Activated T-helper 2 cell treated with anti-CD3 and anti-CD28 coated beads, Interferon-gamma antibody, Interleukin-2, Interleukin-4, amounts not matched to agents 10 μg/mL and 5 μg/mL and 100 μg/mL, durations not matched to agents 14 hours and 24 hours and 36 hours (primary cell): ENCODE measurements at regions of chr3 and their contacts with region 1.

Region 1: DNA sequence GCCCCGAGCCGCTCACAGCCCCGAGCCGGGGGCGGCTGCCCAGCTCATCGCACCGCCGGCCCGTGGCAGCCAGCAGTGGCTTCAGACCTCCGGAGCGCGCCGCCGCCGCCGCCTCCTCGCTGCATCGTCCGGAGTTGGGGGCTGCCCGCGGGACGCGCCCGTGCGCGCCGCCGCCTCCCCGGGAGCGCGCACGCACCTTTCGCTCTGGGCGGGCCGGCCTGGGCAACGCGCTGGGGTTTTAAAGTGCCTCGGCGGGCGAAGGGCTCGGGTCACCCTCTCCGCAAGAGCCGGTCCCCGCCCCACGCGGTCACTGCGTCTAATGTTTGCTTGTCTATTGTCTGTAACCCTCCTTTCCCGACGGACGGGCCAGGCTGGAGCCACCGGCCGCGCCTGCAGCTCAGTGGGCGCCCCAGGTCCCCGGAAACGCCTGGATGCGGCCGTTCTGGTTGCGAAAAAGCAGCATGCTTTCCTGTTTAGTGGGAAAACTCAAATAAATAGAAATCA is at the start of gene RYK:
- DNase-seq: peak; percentile 63
- H3K4me3 Mint-ChIP-seq: peak within 1 kb of the TSS; percentile 87
- H3K27ac Mint-ChIP-seq: peak within 1 kb of the TSS; percentile 77
- H3K4me1 Mint-ChIP-seq: peaks cover 40% of the 10 kb centered on the region
- H3K27me3 Mint-ChIP-seq: peaks cover 44% of the 10 kb centered on the region
- total RNA-seq, gene RYK: 15.8 and 18.4 TPM in 2 replicates

Region 2: DNA sequence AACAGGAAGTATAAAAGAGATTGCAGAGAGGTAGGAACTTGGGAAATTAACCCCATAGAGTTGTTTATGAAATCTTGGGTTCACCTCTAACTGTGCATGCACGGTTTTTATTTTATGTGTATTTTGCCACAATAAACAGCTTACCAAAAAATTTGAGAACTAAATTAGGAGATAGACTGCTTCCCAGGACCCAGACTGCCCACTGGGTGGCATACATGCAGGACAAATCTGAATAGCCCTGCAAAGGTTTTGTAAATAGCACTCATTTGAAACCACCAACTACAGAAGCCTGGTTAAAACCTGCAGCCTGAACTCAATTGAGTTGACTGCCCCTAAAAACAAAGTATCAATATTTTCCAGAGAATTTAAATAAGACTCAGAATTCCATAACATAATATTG is 124.6 kb before region 1 on chr3:
- intact Hi-C with region 1: no loop called
- DNase-seq: no peak
- H3K4me3 Mint-ChIP-seq: no peak overlapping the region
- H3K27ac Mint-ChIP-seq: no peak overlapping the region
- H3K4me1 Mint-ChIP-seq: no peaks in the 10 kb centered on the region
- H3K27me3 Mint-ChIP-seq: no peaks in the 10 kb centered on the region

Region 3: DNA sequence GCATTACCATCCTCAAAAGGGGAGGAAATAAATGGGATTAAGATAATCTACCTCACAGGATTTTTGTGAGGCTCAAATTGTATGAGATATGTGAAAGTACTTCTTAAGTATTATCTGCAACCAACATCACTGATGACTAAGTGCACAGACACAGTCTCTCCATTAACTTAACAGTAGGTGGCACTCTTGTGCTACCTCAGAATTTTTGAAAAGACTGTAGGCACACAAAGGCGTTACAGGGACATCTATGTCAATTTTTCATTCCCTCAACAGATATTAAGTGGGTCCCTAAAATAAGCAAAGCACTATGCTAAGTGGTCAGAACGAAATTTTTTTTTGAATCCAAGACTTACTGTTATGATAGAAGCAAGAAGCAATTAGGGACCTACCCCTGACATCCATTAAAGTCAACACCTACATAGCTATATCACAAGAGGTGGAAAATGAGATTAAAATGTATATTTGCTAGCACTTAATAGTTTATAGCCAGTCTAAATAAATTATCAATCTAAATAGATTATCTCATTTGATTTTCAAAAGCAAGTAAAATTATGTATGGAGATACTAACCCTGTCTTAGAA is 53.0 kb before region 1 on chr3:
- intact Hi-C with region 1: no loop called
- DNase-seq: no peak
- H3K4me3 Mint-ChIP-seq: no peak overlapping the region
- H3K27ac Mint-ChIP-seq: no peak overlapping the region
- H3K4me1 Mint-ChIP-seq: peaks cover 7% of the 10 kb centered on the region
- H3K27me3 Mint-ChIP-seq: no peaks in the 10 kb centered on the region

Region 4: GRCh38 chr3:134212906-134213665 is 37.7 kb before region 1 on chr3:
- intact Hi-C with region 1: loop called (anchors 5 kb)
- DNase-seq: peak; percentile 62
- H3K4me3 Mint-ChIP-seq: no peak overlapping the region
- H3K27ac Mint-ChIP-seq: no peak overlapping the region
- H3K4me1 Mint-ChIP-seq: peaks cover 10% of the 10 kb centered on the region
- H3K27me3 Mint-ChIP-seq: peaks cover 6% of the 10 kb centered on the region

Region 5: DNA sequence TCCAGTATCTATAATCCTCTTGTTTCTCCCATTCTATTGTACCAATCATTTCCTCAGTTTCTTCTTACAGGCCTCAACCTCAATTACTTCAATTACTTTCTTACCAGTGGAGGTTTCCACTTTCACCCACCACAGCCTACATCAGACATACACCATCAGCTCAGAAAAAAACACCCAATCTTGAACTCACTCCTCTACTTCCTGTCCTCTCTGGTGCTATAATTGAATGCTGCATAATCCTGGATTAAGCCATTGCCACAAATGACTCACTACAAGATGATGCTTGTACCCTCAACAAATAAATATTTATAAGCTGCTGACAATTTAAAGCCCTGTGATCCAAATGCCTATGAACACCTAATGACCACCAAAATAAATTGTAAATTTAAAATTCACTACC is 18.6 kb before region 1 on chr3:
- intact Hi-C with region 1: loop called (anchors 2 kb)
- DNase-seq: no peak
- H3K4me3 Mint-ChIP-seq: no peak overlapping the region
- H3K27ac Mint-ChIP-seq: peak overlapping the region; percentile 10
- H3K4me1 Mint-ChIP-seq: peaks cover 25% of the 10 kb centered on the region
- H3K27me3 Mint-ChIP-seq: peaks cover 5% of the 10 kb centered on the region

Region 6: DNA sequence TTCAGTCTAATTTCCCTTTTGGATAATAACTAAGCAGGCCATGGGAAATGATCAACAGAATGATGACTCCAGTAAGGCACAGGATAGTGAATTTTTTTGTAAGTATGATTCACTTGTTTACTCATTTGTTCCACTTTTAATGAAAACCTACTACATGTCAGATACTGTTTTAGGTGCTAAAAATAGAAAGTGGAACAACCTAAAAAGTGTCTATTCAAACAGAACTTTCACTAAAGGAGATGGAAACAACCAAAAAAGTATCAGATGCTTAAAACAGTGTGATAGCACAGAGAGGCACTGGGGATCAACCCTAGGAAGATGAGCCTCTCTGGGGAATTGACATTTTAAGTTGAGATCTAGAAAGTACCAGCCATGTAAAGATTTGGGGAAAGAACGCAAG is 11.2 kb before region 1 on chr3:
- intact Hi-C with region 1: loop called (anchors 2 kb)
- DNase-seq: no peak
- H3K4me3 Mint-ChIP-seq: no peak overlapping the region
- H3K27ac Mint-ChIP-seq: peak overlapping the region; percentile 55
- H3K4me1 Mint-ChIP-seq: peaks cover 46% of the 10 kb centered on the region
- H3K27me3 Mint-ChIP-seq: peaks cover 13% of the 10 kb centered on the region

Region 7: DNA sequence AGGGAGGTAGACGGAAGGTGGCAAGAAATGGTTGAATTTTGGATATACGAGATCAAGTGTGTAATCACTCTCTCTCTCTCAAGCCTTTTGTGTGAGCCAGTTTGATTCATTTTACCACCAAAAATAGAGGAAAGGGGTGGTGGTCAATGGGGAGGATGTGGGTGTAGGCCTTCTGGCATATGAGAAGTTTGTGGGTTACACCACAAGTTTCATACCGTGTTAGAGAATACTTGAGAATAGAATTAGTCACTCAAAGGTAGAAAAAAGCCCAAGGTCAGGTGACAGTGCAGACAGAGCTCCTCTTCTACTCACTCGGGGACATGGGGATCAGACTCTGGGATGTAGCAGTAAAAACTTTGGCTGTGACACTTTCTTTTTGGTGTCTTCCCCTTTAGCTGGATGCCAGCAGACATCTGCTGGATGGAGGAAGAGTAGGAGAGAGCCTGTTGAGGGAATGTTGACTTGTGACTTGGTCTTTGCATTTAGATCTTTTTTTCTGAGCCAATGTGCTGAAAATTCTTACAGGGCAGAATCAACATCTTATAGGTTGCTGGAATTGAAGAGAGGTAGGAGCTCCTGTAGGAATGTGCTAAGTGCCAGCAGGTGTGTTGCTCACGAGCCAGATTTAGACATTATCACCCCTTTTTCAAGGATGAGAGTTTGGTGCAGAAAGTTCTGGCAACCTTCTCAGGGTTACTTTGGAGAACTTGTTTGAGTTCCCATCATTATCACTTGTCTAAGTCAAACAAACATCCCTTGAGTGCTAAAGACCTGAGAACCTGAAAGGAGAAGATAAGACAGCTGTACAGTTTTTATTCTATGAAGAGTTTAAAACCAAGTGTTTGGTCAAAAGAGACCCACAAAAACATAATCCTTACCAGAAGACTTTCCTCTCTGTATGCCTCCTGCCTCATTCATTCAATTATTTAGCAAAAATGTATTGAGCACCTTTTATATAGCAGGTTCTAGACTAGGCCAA is 43.8 kb after region 1 on chr3:
- intact Hi-C with region 1: loop called (anchors 1 kb)
- DNase-seq: peak; percentile 57
- H3K4me3 Mint-ChIP-seq: no peak overlapping the region
- H3K27ac Mint-ChIP-seq: no peak overlapping the region
- H3K4me1 Mint-ChIP-seq: no peaks in the 10 kb centered on the region
- H3K27me3 Mint-ChIP-seq: peaks cover 46% of the 10 kb centered on the region

Region 8: DNA sequence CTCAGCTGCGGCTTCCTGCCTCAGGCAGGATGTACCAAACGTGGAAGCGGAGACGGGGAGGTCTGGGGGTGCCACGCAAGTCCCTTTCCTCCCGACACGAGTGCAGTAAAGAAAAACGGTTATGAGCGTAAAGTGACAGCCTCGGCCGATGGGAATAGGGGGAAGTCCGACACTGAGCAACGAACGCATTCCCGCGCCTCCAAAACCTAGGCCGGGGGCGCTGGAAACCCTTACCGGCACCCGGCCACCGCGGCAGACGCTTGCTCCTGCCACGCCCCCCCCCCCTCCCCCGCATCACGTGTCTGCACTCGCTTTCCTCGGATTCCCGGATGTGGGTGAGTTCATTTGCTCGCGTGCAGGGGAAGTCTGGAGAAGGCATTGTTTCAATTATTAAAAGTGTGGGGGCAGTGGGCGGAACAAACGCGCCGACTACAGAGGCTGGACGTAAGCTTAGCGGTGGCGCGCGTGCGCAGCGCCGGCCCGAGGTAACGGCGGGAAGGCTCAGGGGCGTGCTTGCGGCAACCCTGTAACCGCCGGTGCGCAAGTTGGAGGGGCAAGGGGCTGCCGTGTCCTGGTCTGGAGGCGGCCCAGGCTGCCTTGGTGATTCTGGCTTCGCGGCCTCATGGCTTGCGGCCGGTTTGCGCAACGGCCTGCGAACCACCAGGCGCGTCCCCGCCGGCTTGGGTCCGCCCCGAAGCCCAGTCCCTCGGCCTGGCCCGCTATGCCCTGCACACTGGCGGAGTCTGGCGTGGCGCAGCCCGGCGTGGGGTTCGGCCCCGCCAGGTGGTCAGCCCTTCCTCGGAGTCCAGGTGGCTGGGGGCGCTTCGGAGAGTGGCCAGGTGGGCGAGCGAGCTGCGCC is 235.2 kb after region 1 on chr3 and contains the starts of genes ANAPC13 and CEP63:
- intact Hi-C with region 1: loop called (anchors 5 kb)
- DNase-seq: peak; percentile 92
- H3K4me3 Mint-ChIP-seq: peak within 1 kb of the TSS; percentile 97
- H3K27ac Mint-ChIP-seq: peak within 1 kb of the TSS; percentile 99
- H3K4me1 Mint-ChIP-seq: peaks cover 37% of the 10 kb centered on the region
- H3K27me3 Mint-ChIP-seq: no peaks in the 10 kb centered on the region
- total RNA-seq, gene ANAPC13: 27.3 and 27.4 TPM in 2 replicates
- total RNA-seq, gene CEP63: 18.0 and 20.1 TPM in 2 replicates

Region 9: GRCh38 chr3:134937256-134938028 is 686.7 kb after region 1 on chr3:
- intact Hi-C with region 1: no loop called
- DNase-seq: no peak
- H3K4me3 Mint-ChIP-seq: no peak overlapping the region
- H3K27ac Mint-ChIP-seq: no peak overlapping the region
- H3K4me1 Mint-ChIP-seq: no peaks in the 10 kb centered on the region
- H3K27me3 Mint-ChIP-seq: no peaks in the 10 kb centered on the region